ENCODE measurements at regions of chr2 and their contacts with region 1.

Region 1: GRCh38 chr2:133039531-133039930 is 369.5 kb upstream of the LYPD1 start:
- DNase-seq: no peak
- H3K4me3 ChIP-seq: no peak overlapping the region
- H3K27ac ChIP-seq: no peak overlapping the region
- H3K4me1 ChIP-seq: no peaks in the 10 kb centered on the region
- H3K27me3 ChIP-seq: no peaks in the 10 kb centered on the region
- CTCF ChIP-seq: no peak
- EP300 ChIP-seq: no peak
- POLR2A ChIP-seq: no peak

Region 2: DNA sequence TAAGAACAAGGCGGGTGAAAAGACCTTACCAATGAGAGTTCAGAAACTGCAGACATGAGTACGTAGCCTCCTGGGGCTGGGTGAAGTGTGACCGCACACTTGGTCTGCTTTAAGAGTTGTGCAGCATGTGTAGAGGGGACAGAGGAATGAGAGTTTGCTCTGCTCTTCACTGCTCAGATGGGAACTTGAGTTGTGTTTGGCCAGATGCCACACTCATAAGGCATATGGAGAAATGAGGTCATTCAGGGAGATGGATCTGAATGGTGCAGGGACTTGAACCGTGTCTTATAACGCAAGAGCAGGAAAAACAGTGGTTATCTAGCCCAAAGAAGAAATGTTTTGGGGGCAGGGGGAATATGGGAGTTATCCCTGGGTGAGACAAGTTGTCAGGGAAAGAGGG is 95.7 kb before region 1 on chr2:
- in situ Hi-C with region 1: no loop called
- intact Hi-C with region 1: no loop called
- DNase-seq: no peak
- H3K4me3 ChIP-seq: no peak overlapping the region
- H3K27ac ChIP-seq: no peak overlapping the region
- H3K4me1 ChIP-seq: no peaks in the 10 kb centered on the region
- H3K27me3 ChIP-seq: no peaks in the 10 kb centered on the region
- CTCF ChIP-seq: no peak
- EP300 ChIP-seq: no peak
- POLR2A ChIP-seq: no peak

Region 3: GRCh38 chr2:132971310-132972061 is 68.0 kb before region 1 on chr2:
- in situ Hi-C with region 1: no loop called
- intact Hi-C with region 1: loop called (anchors 2 kb)
- DNase-seq: no peak
- H3K4me3 ChIP-seq: no peak overlapping the region
- H3K27ac ChIP-seq: no peak overlapping the region
- H3K4me1 ChIP-seq: no peaks in the 10 kb centered on the region
- H3K27me3 ChIP-seq: no peaks in the 10 kb centered on the region
- CTCF ChIP-seq: no peak
- EP300 ChIP-seq: no peak
- POLR2A ChIP-seq: no peak

Region 4: GRCh38 chr2:134745023-134745422 is 1705.5 kb after region 1 on chr2:
- in situ Hi-C with region 1: no loop called
- intact Hi-C with region 1: no loop called
- DNase-seq: no peak
- H3K4me3 ChIP-seq: no peak overlapping the region
- H3K27ac ChIP-seq: no peak overlapping the region
- H3K4me1 ChIP-seq: no peaks in the 10 kb centered on the region
- H3K27me3 ChIP-seq: no peaks in the 10 kb centered on the region
- CTCF ChIP-seq: no peak
- EP300 ChIP-seq: no peak
- POLR2A ChIP-seq: no peak

Measured in transverse colon (tissue), 4 donors.